ENCODE measurements at regions of chr1 and their contacts with region 1.

Region 1: DNA sequence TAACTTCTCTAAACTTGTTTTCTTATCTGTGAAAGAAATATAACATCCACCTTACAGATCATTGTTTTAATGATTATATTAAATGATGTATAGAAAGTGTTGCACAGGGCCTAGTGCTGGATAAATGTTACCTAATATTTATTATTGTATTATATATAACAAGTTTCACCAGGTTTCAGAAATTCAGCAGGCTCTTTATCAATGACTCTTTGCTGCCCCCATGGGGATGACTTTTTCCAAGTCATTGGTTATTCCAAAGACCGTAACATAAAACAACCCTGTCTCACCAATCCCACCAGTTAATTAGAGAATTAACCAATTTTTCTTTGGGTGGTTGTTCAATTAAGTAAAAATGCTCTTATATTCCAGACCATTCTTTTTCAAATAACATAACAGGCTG is 7.3 kb upstream of the DEDD start:
- DNase-seq: no peak
- ATAC-seq: peak; percentile 76
- H3K4me3 ChIP-seq: no peak overlapping the region
- H3K27ac ChIP-seq: no peak overlapping the region
- H3K4me1 ChIP-seq: no peaks in the 10 kb centered on the region
- H3K27me3 ChIP-seq: no peaks in the 10 kb centered on the region
- CTCF ChIP-seq: peak; percentile 52 to 81 (median 52)
- POLR2A ChIP-seq: no peak
- RAD21 ChIP-seq: peak; percentile 82

Region 2: GRCh38 chr1:160675641-160676410 is 463.9 kb before region 1 on chr1:
- CTCF ChIA-PET with region 1: no interaction called
- POLR2A ChIA-PET with region 1: no interaction called
- RAD21 ChIA-PET with region 1: no interaction called
- intact Hi-C with region 1: loop called (anchors 5 kb)
- DNase-seq: peak; percentile 57
- ATAC-seq: peak; percentile 98
- H3K4me3 ChIP-seq: no peak overlapping the region
- H3K27ac ChIP-seq: no peak overlapping the region
- H3K4me1 ChIP-seq: peaks cover 0 to 8% of the 10 kb centered on the region in 2 experiments; a peak in 2 of 4 replicates
- H3K27me3 ChIP-seq: no peaks in the 10 kb centered on the region
- CTCF ChIP-seq: peak; percentile 72 to 93 (median 91)
- POLR2A ChIP-seq: no peak
- RAD21 ChIP-seq: peak; percentile 73

Region 3: GRCh38 chr1:160726498-160727315 is 413.1 kb before region 1 on chr1:
- CTCF ChIA-PET with region 1: no interaction called
- POLR2A ChIA-PET with region 1: no interaction called
- RAD21 ChIA-PET with region 1: no interaction called
- intact Hi-C with region 1: loop called (anchors 10 kb)
- DNase-seq: peak; percentile 75
- ATAC-seq: peak; percentile 95
- H3K4me3 ChIP-seq: no peak overlapping the region
- H3K27ac ChIP-seq: 0 out of 2 replicates have a peak overlapping the region, but pooled peaks have one; percentile 11
- H3K4me1 ChIP-seq: peaks cover 6 to 14% of the 10 kb centered on the region in 2 experiments; a peak in 3 of 4 replicates
- H3K27me3 ChIP-seq: no peaks in the 10 kb centered on the region
- CTCF ChIP-seq: peak; percentile 88 to 95 (median 94)
- POLR2A ChIP-seq: no peak
- RAD21 ChIP-seq: peak; percentile 93

Region 4: GRCh38 chr1:160837558-160838205 is 302.1 kb before region 1 on chr1:
- CTCF ChIA-PET with region 1: interaction called, 3 read pairs
- POLR2A ChIA-PET with region 1: no interaction called
- RAD21 ChIA-PET with region 1: no interaction called
- intact Hi-C with region 1: loop called (anchors 5 kb)
- DNase-seq: peak; percentile 12
- ATAC-seq: peak; percentile 76
- H3K4me3 ChIP-seq: no peak overlapping the region
- H3K27ac ChIP-seq: no peak overlapping the region
- H3K4me1 ChIP-seq: 0 out of 4 replicates have a peak, but pooled peaks cover 0 to 3% of the 10 kb centered on the region in 2 experiments
- H3K27me3 ChIP-seq: peaks cover 5% of the 10 kb centered on the region; the same call in 1 of the 2 replicates
- CTCF ChIP-seq: no peak
- POLR2A ChIP-seq: no peak
- RAD21 ChIP-seq: no peak

Region 5: GRCh38 chr1:160997323-160998038 is 142.3 kb before region 1 on chr1:
- CTCF ChIA-PET with region 1: interaction called, 3 read pairs
- POLR2A ChIA-PET with region 1: no interaction called
- RAD21 ChIA-PET with region 1: no interaction called
- intact Hi-C with region 1: loop called (anchors 1 kb)
- DNase-seq: peak; percentile 51
- ATAC-seq: peak; percentile 71
- H3K4me3 ChIP-seq: no peak overlapping the region
- H3K27ac ChIP-seq: peak overlapping the region; percentile 61
- H3K4me1 ChIP-seq: peaks cover 30 to 60% of the 10 kb centered on the region in 2 experiments
- H3K27me3 ChIP-seq: no peaks in the 10 kb centered on the region
- CTCF ChIP-seq: peak; percentile 58 to 75 (median 73); a peak in 5 of 6 replicates
- POLR2A ChIP-seq: no peak
- RAD21 ChIP-seq: peak; percentile 75

Region 6: DNA sequence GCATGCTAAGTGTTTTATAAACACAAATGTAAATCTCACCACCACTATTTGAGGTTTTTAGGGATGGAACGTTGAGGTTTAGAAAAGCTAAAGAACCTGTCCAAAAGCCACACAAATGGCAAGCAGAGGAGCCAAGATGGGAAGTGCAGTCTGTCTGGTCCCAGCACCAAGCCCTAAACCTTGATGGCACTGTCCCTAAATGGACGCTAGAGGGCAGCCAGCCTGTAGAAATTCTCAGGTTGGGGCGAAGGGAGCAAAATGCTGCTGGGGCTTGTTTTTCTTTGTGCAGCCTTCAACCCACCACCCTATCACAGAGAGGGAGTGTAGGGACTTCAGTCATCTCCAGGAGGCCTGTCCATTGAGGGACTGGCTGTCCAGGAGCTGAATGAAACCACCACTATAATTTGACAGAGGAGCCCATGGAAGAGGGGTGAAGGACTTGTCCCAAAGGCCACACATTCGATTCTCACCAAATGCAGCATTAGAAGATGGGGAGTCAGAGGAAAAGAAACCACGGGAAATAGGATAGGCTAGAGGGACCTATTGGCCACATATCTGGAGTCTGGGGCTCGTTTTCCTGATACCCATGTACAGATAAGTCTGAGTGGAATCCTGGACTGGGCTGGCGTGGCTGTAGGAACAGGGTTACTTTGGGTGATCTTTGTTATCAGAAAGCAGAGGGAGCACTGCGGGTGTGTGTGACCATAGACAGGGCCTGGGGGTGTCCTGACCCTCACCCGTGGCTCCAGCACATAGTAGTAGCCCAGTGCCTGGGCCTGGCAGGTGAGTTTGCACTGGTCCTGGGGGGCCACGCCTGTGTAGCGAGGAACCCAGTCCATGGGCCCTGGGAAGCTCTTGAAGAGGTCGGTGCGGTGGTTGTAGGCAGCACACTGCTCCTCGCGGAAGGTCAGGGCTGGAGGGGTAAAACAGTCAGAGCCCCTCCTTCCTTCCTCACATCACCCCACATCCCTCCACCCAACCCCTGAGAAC is 53.0 kb after region 1 on chr1:
- CTCF ChIA-PET with region 1: no interaction called
- POLR2A ChIA-PET with region 1: no interaction called
- RAD21 ChIA-PET with region 1: no interaction called
- intact Hi-C with region 1: no loop called
- DNase-seq: peak; percentile 54
- ATAC-seq: peak; percentile 94
- H3K4me3 ChIP-seq: no peak overlapping the region
- H3K27ac ChIP-seq: no peak overlapping the region; the same call in 1 of the 2 replicates
- H3K4me1 ChIP-seq: peaks cover 0 to 5% of the 10 kb centered on the region in 2 experiments; a peak in 1 of 4 replicates
- H3K27me3 ChIP-seq: no peaks in the 10 kb centered on the region
- CTCF ChIP-seq: peak; percentile 82 to 93 (median 85)
- POLR2A ChIP-seq: no peak
- RAD21 ChIP-seq: peak; percentile 84

Measured in HCT116 (cell line).